Adrenal gland (tissue), 19 donors: ENCODE measurements at regions of chr5 and their contacts with region 1.

Region 1: GRCh38 chr5:111800356-111800755 is 43.4 kb upstream of the NREP start:
- DNase-seq: no peak
- H3K4me3 ChIP-seq: no peak overlapping the region
- H3K27ac ChIP-seq: no peak overlapping the region
- H3K4me1 ChIP-seq: no peaks in the 10 kb centered on the region
- H3K27me3 ChIP-seq: no peaks in the 10 kb centered on the region
- CTCF ChIP-seq: no peak
- POLR2A ChIP-seq: no peak

Region 2: GRCh38 chr5:112136773-112137172 is 336.4 kb after region 1 on chr5:
- intact Hi-C with region 1: loop called in 1 of 2 experiments (anchors 5 kb)
- DNase-seq: no peak
- H3K4me3 ChIP-seq: no peak overlapping the region
- H3K27ac ChIP-seq: no peak overlapping the region
- H3K4me1 ChIP-seq: no peaks in the 10 kb centered on the region
- H3K27me3 ChIP-seq: no peaks in the 10 kb centered on the region
- CTCF ChIP-seq: no peak
- POLR2A ChIP-seq: no peak